ENCODE measurements at regions of chr14 and their contacts with region 1.

Region 1: GRCh38 chr14:105490572-105491366 is at the start of gene TEDC1:
- DNase-seq: peak; percentile 99
- H3K4me3 Mint-ChIP-seq: peak within 1 kb of the TSS; percentile 87
- H3K27ac Mint-ChIP-seq: peak within 1 kb of the TSS; percentile 90
- H3K4me1 Mint-ChIP-seq: peaks cover 10% of the 10 kb centered on the region
- H3K27me3 Mint-ChIP-seq: no peaks in the 10 kb centered on the region
- total RNA-seq, gene TEDC1: 44.5 and 46.1 TPM in 2 replicates

Region 2: DNA sequence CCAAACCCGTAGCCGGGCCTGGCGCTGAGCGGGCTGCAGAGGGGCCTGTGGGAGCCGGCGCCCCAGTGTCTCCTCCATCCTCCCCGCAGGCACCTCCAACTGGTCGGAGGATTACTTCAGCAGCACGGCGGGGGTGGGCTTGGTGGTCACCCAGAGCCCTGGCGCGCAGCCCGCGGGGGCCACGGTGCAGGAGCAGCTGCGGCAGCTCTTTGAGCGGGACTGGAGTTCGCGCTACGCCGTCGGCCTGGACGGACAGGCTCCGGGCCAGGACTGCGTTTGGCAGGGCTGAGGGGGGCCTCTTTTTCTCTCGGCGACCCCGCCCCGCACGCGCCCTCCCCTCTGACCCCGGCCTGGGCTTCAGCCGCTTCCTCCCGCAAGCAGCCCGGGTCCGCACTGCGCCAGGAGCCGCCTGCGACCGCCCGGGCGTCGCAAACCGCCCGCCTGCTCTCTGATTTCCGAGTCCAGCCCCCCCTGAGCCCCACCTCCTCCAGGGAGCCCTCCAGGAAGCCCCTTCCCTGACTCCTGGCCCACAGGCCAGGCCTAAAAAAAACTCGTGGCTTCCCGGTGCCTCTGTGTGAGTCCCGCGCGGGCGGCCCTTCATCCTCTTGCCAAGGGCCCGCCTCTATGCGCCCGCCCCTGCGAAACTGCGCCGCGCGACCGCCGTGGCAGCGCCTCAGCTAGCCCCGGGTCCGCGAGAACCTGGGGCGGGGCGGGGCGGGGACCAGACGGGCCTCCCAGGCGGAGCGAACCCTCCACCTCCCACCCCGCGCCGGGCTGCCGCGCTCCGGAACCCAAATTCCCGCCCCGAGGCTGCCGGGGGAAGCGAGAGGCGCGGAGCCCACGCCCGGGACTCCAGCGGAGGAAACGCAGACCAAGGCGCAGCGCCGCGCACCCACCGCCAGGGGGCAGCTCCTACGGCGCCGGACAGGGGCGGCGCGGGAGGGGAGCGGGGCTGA is 557.8 kb before region 1 on chr14:
- intact Hi-C with region 1: loop called (anchors 1 kb)
- DNase-seq: peak; percentile 84
- H3K4me3 Mint-ChIP-seq: peak overlapping the region; percentile 49
- H3K27ac Mint-ChIP-seq: no peak overlapping the region
- H3K4me1 Mint-ChIP-seq: peaks cover 5% of the 10 kb centered on the region
- H3K27me3 Mint-ChIP-seq: peaks cover 7% of the 10 kb centered on the region

Region 3: GRCh38 chr14:105065280-105066228 is 425.2 kb before region 1 on chr14 and contains the start of gene GPR132:
- intact Hi-C with region 1: loop called (anchors 1 kb)
- DNase-seq: peak; percentile 89
- H3K4me3 Mint-ChIP-seq: peak within 1 kb of the TSS; percentile 89
- H3K27ac Mint-ChIP-seq: peak within 1 kb of the TSS; percentile 90
- H3K4me1 Mint-ChIP-seq: peaks cover 62% of the 10 kb centered on the region
- H3K27me3 Mint-ChIP-seq: no peaks in the 10 kb centered on the region
- total RNA-seq, gene GPR132: 24.6 and 24.9 TPM in 2 replicates

Region 4: DNA sequence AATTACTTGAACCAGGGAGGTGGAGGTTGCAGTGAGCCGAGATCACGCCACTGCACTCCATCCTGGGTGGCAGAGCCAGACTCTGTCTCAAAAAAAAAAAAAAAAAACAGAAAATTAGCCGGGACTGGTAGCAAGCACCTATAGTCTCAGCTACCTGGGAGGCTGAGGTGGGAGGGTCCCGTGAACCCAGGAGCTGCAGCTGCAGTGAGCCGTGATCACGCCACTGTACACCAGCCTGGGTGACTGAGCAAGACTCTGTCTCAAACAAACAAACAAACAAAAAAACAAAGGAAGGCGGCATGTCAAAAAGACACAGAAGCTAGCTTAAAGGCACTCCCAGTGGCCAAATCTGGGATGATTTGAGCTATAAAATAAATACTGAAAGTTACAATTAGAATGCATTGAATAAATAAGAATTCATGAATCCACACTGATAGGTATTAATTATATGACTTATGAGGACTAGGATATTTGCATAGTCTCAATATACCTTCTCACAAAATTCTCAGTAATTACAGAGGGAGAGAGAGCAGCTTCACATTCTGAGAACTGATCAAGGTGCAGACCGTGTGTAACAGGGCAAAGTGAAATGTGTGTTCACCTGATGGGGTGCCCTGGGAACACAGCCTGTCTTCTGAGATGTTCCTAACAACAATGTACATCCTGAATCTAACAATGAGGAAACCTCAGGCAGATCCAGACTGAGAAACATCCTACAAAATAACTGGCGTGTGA is 382.8 kb before region 1 on chr14:
- intact Hi-C with region 1: no loop called
- DNase-seq: no peak
- H3K4me3 Mint-ChIP-seq: no peak overlapping the region
- H3K27ac Mint-ChIP-seq: no peak overlapping the region
- H3K4me1 Mint-ChIP-seq: peaks cover 7% of the 10 kb centered on the region
- H3K27me3 Mint-ChIP-seq: peaks cover 31% of the 10 kb centered on the region

Region 5: DNA sequence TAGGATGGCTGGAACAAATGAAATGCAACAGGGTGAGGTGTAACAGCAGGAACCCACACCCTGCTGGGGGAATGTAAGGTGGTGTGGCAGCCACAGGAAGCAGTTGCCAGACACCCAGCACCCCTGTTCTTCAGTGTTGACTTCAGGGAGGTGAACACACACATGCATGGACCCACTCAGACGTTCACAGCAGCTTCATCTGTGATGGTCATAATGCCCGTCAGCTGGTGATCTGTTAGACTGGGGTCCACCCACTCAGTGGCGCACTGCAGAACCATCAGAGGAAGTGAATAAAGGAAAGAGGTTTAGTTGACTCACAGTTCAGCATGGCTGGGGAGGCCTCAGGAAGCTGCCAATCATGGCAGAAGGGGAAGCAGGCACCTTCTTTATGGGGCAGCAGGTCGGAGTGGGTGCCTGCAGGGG is 115.1 kb before region 1 on chr14:
- intact Hi-C with region 1: loop called (anchors 1 kb)
- DNase-seq: peak; percentile 25
- H3K4me3 Mint-ChIP-seq: peak overlapping the region; percentile 8
- H3K27ac Mint-ChIP-seq: peak overlapping the region; percentile 95
- H3K4me1 Mint-ChIP-seq: peaks cover 16% of the 10 kb centered on the region
- H3K27me3 Mint-ChIP-seq: no peaks in the 10 kb centered on the region

Region 6: DNA sequence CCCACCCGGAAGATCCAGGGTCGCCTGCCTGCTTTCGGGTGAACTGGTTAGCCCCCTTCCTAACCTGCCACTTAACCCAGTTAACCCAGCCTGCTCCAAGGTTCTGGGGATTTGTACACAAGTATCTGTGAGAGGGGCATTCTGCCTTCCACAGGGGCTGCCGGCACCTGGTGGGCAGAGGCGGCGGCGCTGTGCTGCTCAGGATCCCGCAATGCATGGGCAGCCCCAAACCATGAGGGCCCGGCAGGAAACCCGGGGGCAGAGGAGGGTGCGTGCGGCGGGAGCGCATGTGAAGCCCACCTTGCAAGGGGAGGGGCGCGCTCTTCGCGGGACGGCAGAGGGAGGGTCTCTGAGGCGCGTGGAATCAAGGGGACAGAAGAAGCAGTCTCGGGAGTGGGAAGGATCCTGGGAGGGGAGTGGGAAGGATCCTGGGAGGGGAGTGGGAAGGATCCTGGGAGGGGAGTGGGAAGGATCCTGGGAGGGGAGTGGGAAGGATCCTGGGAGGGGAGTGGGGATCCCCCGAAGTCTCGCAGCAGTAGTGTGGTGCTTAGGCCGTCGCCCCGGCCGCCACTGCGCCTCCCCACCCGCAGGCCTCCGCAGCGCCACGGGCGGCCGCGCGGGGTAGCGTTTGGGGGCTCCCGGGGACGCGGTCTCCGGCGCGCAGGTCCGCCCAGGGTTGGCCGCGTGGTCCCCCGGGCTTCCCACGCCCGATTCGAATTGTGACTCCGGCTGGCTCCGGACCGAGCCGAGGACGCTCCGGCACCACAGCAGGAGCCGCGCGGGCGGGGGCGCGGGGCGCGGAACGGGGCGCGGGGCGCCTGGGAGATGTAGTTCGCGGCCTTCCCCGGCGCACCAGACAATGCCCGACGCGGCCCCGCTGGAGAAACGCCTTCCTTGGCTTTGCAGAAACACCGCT is 76.1 kb before region 1 on chr14:
- intact Hi-C with region 1: loop called (anchors 1 kb)
- DNase-seq: peak; percentile 61
- H3K4me3 Mint-ChIP-seq: peak overlapping the region; percentile 79
- H3K27ac Mint-ChIP-seq: no peak overlapping the region
- H3K4me1 Mint-ChIP-seq: peaks cover 5% of the 10 kb centered on the region
- H3K27me3 Mint-ChIP-seq: peaks cover 22% of the 10 kb centered on the region

Region 7: GRCh38 chr14:105439691-105440553 is 50.8 kb before region 1 on chr14:
- intact Hi-C with region 1: no loop called
- DNase-seq: no peak
- H3K4me3 Mint-ChIP-seq: no peak overlapping the region
- H3K27ac Mint-ChIP-seq: no peak overlapping the region
- H3K4me1 Mint-ChIP-seq: no peaks in the 10 kb centered on the region
- H3K27me3 Mint-ChIP-seq: no peaks in the 10 kb centered on the region

Region 8: DNA sequence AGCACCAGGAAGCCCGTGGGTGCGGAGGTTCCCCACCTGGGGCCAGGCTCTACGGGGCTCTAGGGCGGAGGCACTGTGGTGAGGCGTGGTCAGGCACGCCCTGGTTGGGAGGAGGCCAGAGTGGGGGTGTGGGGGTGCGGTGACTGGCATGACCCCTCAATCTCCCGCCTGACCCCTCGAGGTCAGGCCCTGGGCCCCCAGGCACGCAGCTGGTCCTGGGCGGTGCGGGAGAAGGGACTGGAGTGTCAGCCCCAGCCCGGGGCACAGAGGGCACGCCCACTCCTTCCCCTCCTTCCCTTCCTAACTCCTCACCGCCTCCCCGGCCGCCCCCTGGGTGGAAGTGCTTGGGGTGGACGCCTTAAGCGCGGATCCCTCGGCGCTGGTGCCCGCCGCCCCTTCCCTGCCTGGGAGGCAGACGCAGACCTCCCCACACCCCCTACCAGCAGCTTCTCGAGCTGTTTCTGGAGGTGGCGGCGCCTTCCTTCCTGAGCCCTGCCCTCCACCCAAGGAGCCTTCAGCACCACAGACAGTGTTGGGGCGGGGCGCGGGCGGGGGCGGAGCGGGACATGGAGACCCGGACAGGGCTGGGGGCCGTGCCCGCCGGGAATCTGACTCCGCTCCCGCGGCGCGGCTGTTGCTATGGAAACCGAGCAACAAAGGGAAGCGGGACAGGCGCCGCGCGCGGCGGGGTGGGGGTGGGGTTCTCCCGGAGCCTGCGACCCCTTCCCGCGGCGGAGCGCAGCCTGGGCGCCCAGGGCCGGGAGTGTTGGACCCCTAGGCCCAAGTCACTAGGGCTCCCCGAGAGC is 16.9 kb before region 1 on chr14:
- intact Hi-C with region 1: loop called (anchors 2 kb)
- DNase-seq: peak; percentile 49
- H3K4me3 Mint-ChIP-seq: peak overlapping the region; percentile 49
- H3K27ac Mint-ChIP-seq: no peak overlapping the region
- H3K4me1 Mint-ChIP-seq: no peaks in the 10 kb centered on the region
- H3K27me3 Mint-ChIP-seq: peaks cover 8% of the 10 kb centered on the region

Region 9: DNA sequence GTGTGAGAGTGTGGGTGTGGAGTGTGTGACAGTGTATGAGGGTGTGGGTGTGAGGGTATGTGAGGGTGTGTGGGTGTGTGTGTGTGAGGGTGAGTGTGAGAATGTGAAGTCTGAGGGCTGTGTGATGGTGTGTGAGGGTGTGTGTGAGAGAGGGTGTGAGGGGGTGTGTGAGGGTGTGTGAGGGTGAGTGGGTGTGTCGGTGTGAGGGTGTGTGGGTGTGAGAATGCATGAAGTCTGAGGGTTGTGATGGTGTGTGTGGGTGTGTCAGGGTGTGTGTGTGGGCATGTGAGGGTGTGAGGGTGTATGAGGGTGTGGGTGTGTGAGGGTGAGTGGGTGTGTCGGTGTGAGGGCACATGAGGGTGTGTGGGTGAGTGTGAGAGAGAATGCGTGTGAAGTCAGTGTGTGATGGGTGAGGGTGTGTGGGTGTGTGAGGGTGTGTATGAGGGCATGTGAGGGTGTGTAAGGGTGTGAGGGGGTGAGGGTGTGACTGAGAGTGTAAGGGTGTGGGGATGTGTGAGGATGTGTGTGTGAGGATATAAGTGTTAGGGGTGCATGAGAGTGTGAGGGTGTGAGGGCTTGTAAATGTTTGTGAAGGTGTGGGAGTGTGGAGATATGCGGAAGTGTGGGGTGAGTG is 72.1 kb after region 1 on chr14:
- intact Hi-C with region 1: no loop called
- DNase-seq: no peak
- H3K4me3 Mint-ChIP-seq: no peak overlapping the region
- H3K27ac Mint-ChIP-seq: peak overlapping the region; percentile 82
- H3K4me1 Mint-ChIP-seq: no peaks in the 10 kb centered on the region
- H3K27me3 Mint-ChIP-seq: no peaks in the 10 kb centered on the region